T-cell (primary cell): ENCODE measurements at regions of chr9 and their contacts with region 1.

Region 1: DNA sequence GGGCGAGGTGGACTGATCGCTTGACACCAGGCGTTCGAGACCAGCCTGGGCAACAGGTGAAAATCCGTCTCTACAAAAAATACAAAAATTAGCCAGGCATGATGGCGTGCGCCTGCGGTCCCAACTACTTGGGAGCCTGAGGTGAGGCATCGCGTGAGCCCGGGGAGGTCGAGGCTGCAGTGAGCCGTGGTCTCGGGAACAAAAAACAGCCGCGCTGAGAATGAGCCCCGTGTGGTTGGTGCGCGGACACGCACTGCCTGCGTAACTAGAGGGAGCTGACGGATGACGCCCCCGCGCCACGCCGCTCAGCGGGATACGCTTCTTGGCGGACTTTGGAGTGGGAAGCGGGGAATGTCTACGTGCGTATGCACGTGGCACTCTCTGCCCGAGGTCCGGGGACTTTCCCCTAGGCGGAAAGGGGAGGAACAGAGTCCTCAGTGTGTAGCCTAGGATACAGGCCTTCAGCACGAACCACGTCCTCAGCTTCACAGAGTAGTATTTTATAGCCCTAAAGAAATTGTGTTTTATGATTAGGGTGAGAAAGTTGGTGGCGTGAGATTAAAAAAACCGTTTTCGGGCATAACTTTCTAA is at the start of gene RMRP:
- DNase-seq: peak; percentile 58 to 95 (median 76)
- ATAC-seq: peak; percentile 79 to 87 (median 81)
- H3K4me3 ChIP-seq: peak within 1 kb of the TSS; percentile 81 to 95
- H3K4me3 Mint-ChIP-seq: peak within 1 kb of the TSS; percentile 84 to 93 (median 89)
- H3K27ac ChIP-seq: peak within 1 kb of the TSS; percentile 99
- H3K27ac Mint-ChIP-seq: peak within 1 kb of the TSS; percentile 96 to 99
- H3K4me1 ChIP-seq: peaks cover 29 to 69% of the 10 kb centered on the region in 2 experiments
- H3K4me1 Mint-ChIP-seq: peaks cover 64 to 78% (median 67%) of the 10 kb centered on the region in 3 donors
- H3K27me3 ChIP-seq: no peaks in the 10 kb centered on the region
- H3K27me3 Mint-ChIP-seq: peaks cover 4 to 5% of the 10 kb centered on the region in 2 donors
- total RNA-seq, gene RMRP: 10,537 to 37,987 (median 30,491) TPM

Region 2: DNA sequence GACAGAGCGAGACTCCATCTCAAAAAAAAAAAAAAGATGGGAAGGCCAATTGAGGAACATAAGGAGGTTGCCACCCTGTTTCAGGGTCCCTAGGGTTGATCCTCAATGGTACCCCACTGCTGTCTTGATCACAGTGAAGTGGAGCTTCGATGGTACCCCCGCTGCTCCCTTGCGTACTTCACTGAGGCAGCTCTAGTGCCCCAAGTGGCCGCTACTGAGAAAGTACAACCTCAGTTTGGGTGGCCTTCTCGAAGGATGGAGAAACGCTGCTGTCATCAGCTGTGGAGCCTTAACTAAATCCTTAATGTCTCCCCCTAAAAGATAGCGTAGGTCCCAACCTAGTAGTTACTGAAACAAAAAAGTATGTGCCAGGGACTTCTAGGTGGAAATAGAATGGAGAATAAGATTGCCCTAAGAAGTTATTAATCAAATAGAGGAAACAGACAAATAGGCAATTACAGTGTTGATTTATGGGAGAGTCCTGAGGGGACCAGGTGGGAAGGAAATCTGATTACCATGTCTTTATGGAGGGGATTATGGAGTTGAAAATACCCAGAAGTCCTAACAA is 46.3 kb before region 1 on chr9:
- CTCF ChIA-PET with region 1: interaction called, 8 to 10 read pairs
- POLR2A ChIA-PET with region 1: interaction called in 1 of 2 experiments, 3 read pairs
- DNase-seq: peak in 33 of 35 experiments; percentile 8 to 76 (median 50)
- ATAC-seq: peak; percentile 83 to 96 (median 91)
- H3K4me3 ChIP-seq: no peak overlapping the region
- H3K4me3 Mint-ChIP-seq: no peak overlapping the region
- H3K27ac ChIP-seq: no peak overlapping the region
- H3K27ac Mint-ChIP-seq: peak overlapping the region; percentile 47 to 49
- H3K4me1 ChIP-seq: peaks cover 4 to 23% of the 10 kb centered on the region in 2 experiments
- H3K4me1 Mint-ChIP-seq: peaks cover 23 to 31% (median 26%) of the 10 kb centered on the region in 3 donors
- H3K27me3 ChIP-seq: no peaks in the 10 kb centered on the region
- H3K27me3 Mint-ChIP-seq: no peaks in the 10 kb centered on the region

Region 3: DNA sequence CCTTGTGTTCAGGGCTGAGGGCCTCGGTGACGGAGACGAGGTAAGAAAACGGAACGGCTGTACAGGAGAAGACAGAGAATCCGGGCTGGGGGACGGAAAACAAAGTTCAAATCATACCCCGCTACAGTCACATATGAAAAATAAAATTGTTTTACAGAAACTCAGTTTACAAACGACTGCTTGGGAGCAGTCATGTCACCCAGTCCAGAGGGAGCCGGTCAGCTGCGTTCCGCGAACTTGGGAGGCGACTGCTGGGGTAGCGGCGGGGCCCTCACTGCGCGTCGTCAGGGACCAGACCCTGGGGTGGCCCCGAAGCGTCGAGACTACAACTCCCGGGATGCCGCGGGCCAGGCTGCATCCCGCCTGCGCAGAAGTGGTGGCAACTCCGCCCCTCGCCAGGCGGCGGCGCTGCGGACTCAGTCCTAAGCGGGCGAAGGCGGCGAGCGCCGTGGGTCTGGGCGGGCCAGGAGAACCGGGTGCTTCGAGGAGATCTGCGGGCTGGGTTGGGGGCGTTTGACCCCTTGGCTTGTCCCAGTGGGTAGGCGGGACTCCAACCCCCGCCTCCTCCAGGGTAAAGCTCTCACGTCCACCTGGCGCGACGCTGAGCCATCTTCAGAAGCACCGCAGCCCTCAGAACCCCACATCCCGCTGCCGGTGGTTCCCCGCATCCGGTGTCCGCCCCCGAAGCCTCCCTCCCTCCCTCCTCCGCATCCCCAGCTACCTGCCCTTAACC is 10.9 kb before region 1 on chr9:
- CTCF ChIA-PET with region 1: interaction called, 5 to 122 read pairs
- POLR2A ChIA-PET with region 1: interaction called, 4 to 5 read pairs
- DNase-seq: peak; percentile 74 to 95 (median 87)
- ATAC-seq: peak; percentile 83 to 87 (median 85)
- H3K4me3 ChIP-seq: peak overlapping the region; percentile 81 to 84
- H3K4me3 Mint-ChIP-seq: peak overlapping the region; percentile 85 to 97 (median 95)
- H3K27ac ChIP-seq: peak overlapping the region; percentile 92
- H3K27ac Mint-ChIP-seq: peak overlapping the region; percentile 99
- H3K4me1 ChIP-seq: peaks cover 31 to 78% of the 10 kb centered on the region in 2 experiments
- H3K4me1 Mint-ChIP-seq: peaks cover 54 to 74% (median 59%) of the 10 kb centered on the region in 3 donors
- H3K27me3 ChIP-seq: no peaks in the 10 kb centered on the region
- H3K27me3 Mint-ChIP-seq: no peaks in the 10 kb centered on the region

Region 4: GRCh38 chr9:35732122-35732799 is 74.6 kb after region 1 on chr9 and contains the starts of genes CREB3 and TLN1:
- CTCF ChIA-PET with region 1: interaction called, 7 to 14 read pairs
- POLR2A ChIA-PET with region 1: no interaction called
- DNase-seq: peak; percentile 91 to 98 (median 93)
- ATAC-seq: peak; percentile 88 to 92 (median 90)
- H3K4me3 ChIP-seq: peak within 1 kb of the TSS; percentile 94 to 97
- H3K4me3 Mint-ChIP-seq: peak within 1 kb of the TSS in 1 of 3 donors; percentile 95
- H3K27ac ChIP-seq: peak within 1 kb of the TSS; percentile 95
- H3K27ac Mint-ChIP-seq: peak within 1 kb of the TSS; percentile 94 to 95
- H3K4me1 ChIP-seq: peaks cover 46 to 68% of the 10 kb centered on the region in 2 experiments
- H3K4me1 Mint-ChIP-seq: peaks cover 17 to 31% (median 30%) of the 10 kb centered on the region in 3 donors
- H3K27me3 ChIP-seq: no peaks in the 10 kb centered on the region
- H3K27me3 Mint-ChIP-seq: no peaks in the 10 kb centered on the region
- total RNA-seq, gene CREB3: 15.9 to 22.6 (median 19.3) TPM
- total RNA-seq, gene TLN1: 229 to 366 (median 294) TPM